Calu3 (cell line): ENCODE measurements at regions of chr20 and their contacts with region 1.

Region 1: DNA sequence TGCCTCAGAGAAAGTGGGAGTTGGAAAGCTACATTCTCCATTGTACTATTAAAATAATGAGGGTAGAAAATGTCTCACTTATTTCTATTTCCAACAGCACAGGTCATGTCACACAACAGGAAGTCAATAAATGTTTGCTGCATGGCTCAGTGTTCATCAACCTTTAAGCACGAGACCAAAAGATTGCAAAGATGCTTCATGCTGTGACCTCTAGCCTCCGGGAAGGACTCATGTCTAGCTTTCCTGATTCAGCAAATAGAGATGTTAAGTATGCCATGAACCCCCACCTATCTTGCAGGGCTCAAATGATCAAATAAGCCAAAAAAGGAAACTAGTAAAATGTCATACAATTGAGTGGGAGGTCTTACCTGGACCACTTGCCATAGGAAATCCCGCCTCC is 57.4 kb downstream of the NCOA6 start:
- DNase-seq: no peak
- H3K4me3 Mint-ChIP-seq: no peak overlapping the region
- H3K27ac Mint-ChIP-seq: no peak overlapping the region
- H3K4me1 Mint-ChIP-seq: peaks cover 5% of the 10 kb centered on the region
- H3K27me3 Mint-ChIP-seq: no peaks in the 10 kb centered on the region
- CTCF ChIP-seq: no peak

Region 2: GRCh38 chr20:34709831-34710567 is 58.1 kb before region 1 on chr20:
- CTCF ChIA-PET with region 1: interaction called, 4 read pairs
- intact Hi-C with region 1: loop called (anchors 10 kb)
- DNase-seq: peak; percentile 67
- H3K4me3 Mint-ChIP-seq: peak overlapping the region; percentile 87
- H3K27ac Mint-ChIP-seq: peak overlapping the region; percentile 72
- H3K4me1 Mint-ChIP-seq: peaks cover 43% of the 10 kb centered on the region
- H3K27me3 Mint-ChIP-seq: peaks cover 17% of the 10 kb centered on the region
- CTCF ChIP-seq: peak; percentile 30